MCF 10A (cell line): ENCODE measurements at regions of chr10 and their contacts with region 1.

Region 1: DNA sequence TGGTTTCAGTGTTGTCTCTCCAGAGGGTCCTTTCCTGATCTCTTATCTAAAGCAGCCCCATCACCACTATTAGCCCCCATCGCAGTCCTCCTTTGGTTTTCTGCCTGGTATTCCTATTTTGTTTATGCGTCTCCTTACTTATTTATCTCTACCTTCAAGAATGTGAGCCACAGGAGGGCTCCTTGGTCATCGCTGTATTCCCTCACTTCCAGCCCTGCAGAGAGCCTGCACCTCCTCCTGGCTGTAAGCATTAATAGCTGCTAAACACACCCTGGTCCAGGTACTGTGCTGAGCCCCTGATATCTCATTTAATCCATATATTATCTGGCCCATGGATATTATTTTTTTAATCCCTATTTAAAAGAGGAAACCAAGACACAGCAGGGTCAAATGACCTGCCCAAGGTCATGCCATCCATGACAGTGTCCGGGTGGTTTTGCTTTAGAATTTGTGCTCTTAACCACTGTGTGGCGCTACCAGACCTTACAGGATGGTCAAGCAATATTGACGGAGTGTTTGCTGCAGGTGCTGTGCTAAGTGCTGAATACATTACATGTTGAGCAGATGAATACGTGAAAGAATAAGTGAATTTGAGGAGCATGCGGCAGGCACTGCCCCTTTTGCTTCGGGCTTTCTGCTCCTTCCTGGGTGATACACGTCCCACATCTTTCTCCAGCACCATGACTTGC is 227.2 kb downstream of the ADAM12 start:
- DNase-seq: peak; percentile 54
- H3K4me3 Mint-ChIP-seq: no peak overlapping the region
- H3K27ac Mint-ChIP-seq: no peak overlapping the region
- H3K4me1 Mint-ChIP-seq: no peaks in the 10 kb centered on the region
- H3K27me3 Mint-ChIP-seq: peaks cover 28% of the 10 kb centered on the region
- CTCF ChIP-seq: peak; percentile 48

Region 2: GRCh38 chr10:126191192-126191591 is 30.1 kb after region 1 on chr10:
- CTCF ChIA-PET with region 1: no interaction called
- POLR2A ChIA-PET with region 1: no interaction called
- intact Hi-C with region 1: no loop called
- DNase-seq: no peak
- H3K4me3 Mint-ChIP-seq: no peak overlapping the region
- H3K27ac Mint-ChIP-seq: no peak overlapping the region
- H3K4me1 Mint-ChIP-seq: no peaks in the 10 kb centered on the region
- H3K27me3 Mint-ChIP-seq: peaks cover 12% of the 10 kb centered on the region
- CTCF ChIP-seq: no peak

Region 3: GRCh38 chr10:126302826-126303665 is 141.9 kb after region 1 on chr10:
- CTCF ChIA-PET with region 1: no interaction called
- POLR2A ChIA-PET with region 1: no interaction called
- intact Hi-C with region 1: loop called (anchors 10 kb)
- DNase-seq: no peak
- H3K4me3 Mint-ChIP-seq: no peak overlapping the region
- H3K27ac Mint-ChIP-seq: no peak overlapping the region
- H3K4me1 Mint-ChIP-seq: no peaks in the 10 kb centered on the region
- H3K27me3 Mint-ChIP-seq: no peaks in the 10 kb centered on the region
- CTCF ChIP-seq: no peak

Region 4: GRCh38 chr10:126504063-126504739 is 343.1 kb after region 1 on chr10:
- CTCF ChIA-PET with region 1: interaction called, 4 read pairs
- POLR2A ChIA-PET with region 1: no interaction called
- intact Hi-C with region 1: loop called (anchors 1 kb)
- DNase-seq: peak; percentile 82
- H3K4me3 Mint-ChIP-seq: no peak overlapping the region
- H3K27ac Mint-ChIP-seq: no peak overlapping the region
- H3K4me1 Mint-ChIP-seq: no peaks in the 10 kb centered on the region
- H3K27me3 Mint-ChIP-seq: no peaks in the 10 kb centered on the region
- CTCF ChIP-seq: peak; percentile 75